ENCODE measurements at regions of chr6 and their contacts with region 1.

Region 1: GRCh38 chr6:34887753-34888513 is at the start of gene TAF11:
- DNase-seq: peak; percentile 97
- H3K4me3 Mint-ChIP-seq: peak within 1 kb of the TSS; percentile 100
- H3K27ac Mint-ChIP-seq: peak within 1 kb of the TSS; percentile 99
- H3K4me1 Mint-ChIP-seq: peaks cover 31% of the 10 kb centered on the region
- H3K27me3 Mint-ChIP-seq: peaks cover 9% of the 10 kb centered on the region
- total RNA-seq, gene TAF11: 37.3 and 40.3 TPM in 2 replicates

Region 2: GRCh38 chr6:34709386-34709785 is 178.5 kb before region 1 on chr6:
- intact Hi-C with region 1: no loop called
- DNase-seq: no peak
- H3K4me3 Mint-ChIP-seq: no peak overlapping the region
- H3K27ac Mint-ChIP-seq: no peak overlapping the region
- H3K4me1 Mint-ChIP-seq: peaks cover 4% of the 10 kb centered on the region
- H3K27me3 Mint-ChIP-seq: no peaks in the 10 kb centered on the region

Region 3: GRCh38 chr6:34757687-34758274 is 130.2 kb before region 1 on chr6:
- intact Hi-C with region 1: loop called (anchors 1 kb)
- DNase-seq: no peak
- H3K4me3 Mint-ChIP-seq: no peak overlapping the region
- H3K27ac Mint-ChIP-seq: no peak overlapping the region
- H3K4me1 Mint-ChIP-seq: peaks cover 7% of the 10 kb centered on the region
- H3K27me3 Mint-ChIP-seq: no peaks in the 10 kb centered on the region

Region 4: DNA sequence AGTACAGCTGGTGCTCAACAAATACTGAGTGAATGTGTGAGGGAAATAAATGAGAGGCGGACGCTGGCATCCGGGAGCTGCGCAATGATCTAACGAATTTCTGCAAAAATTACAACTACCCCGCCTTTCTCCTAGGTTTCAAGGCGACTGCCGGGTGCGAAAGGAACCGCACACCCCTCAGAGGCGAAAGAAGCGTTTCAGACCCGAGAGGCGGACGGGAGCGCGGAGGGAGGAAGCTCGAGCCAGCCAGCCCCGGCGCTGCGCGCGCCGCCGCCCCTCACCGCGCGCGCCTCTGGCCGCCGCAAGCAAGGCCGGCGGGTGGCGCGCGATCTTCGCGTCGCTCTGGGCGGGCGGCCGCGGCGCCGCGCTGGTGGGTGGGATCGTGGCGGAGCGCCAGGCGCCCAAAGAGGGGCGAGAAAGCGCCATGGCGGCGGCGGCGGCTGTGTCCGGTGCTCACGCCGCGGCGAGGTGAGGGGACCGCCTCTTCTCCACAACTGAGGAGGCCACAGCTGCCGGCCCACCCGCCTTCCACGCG is 96.2 kb before region 1 on chr6 and contains the start of gene BLTP3A:
- intact Hi-C with region 1: loop called (anchors 2 kb)
- DNase-seq: peak; percentile 94
- H3K4me3 Mint-ChIP-seq: peak within 1 kb of the TSS; percentile 97
- H3K27ac Mint-ChIP-seq: peak within 1 kb of the TSS; percentile 93
- H3K4me1 Mint-ChIP-seq: peaks cover 22% of the 10 kb centered on the region
- H3K27me3 Mint-ChIP-seq: no peaks in the 10 kb centered on the region
- total RNA-seq, gene BLTP3A: 17.0 and 18.3 TPM in 2 replicates

Region 5: GRCh38 chr6:34839666-34840352 is 48.1 kb before region 1 on chr6:
- intact Hi-C with region 1: no loop called
- DNase-seq: no peak
- H3K4me3 Mint-ChIP-seq: no peak overlapping the region
- H3K27ac Mint-ChIP-seq: no peak overlapping the region
- H3K4me1 Mint-ChIP-seq: peaks cover 5% of the 10 kb centered on the region
- H3K27me3 Mint-ChIP-seq: no peaks in the 10 kb centered on the region

Region 6: GRCh38 chr6:34901930-34902329 is 14.0 kb after region 1 on chr6:
- intact Hi-C with region 1: no loop called
- DNase-seq: no peak
- H3K4me3 Mint-ChIP-seq: no peak overlapping the region
- H3K27ac Mint-ChIP-seq: no peak overlapping the region
- H3K4me1 Mint-ChIP-seq: peaks cover 7% of the 10 kb centered on the region
- H3K27me3 Mint-ChIP-seq: peaks cover 14% of the 10 kb centered on the region

Region 7: DNA sequence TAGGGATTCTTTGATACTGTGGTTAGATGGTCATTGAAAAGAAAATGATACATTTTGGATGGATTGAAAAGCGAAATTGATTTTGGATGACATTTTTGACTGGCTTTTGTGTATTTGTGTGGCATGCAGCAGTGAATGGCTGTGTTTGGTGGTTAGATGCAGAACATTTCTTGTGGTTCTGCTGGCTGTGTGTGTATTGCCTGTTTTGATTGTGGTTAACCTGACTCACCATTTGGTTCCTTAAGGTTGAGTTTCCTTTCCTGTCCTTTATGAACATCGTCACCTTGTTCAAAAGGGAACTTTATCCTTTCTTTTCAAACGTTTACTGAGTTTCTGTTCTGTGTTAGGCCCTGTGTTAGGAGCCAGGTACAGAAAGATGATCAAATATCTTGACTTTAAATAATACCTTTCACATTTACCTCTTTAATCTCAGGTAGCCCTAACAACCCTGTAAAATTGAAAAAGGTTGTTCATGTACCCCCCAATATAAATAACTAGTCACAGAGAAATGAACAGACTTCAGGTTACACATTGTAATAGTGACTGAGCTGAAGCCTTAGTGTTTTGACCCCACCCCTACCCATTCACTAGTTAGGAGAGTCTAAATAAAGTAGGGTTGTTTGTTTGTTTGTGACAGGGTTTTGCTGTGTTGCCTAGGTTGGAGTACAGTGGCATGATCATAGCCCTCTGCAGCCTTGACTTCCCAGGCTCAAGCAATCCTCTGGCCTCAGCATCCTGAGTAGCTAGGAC is 25.0 kb after region 1 on chr6:
- intact Hi-C with region 1: loop called (anchors 1 kb)
- DNase-seq: peak; percentile 85
- H3K4me3 Mint-ChIP-seq: peak overlapping the region; percentile 64
- H3K27ac Mint-ChIP-seq: peak overlapping the region; percentile 87
- H3K4me1 Mint-ChIP-seq: peaks cover 35% of the 10 kb centered on the region
- H3K27me3 Mint-ChIP-seq: peaks cover 45% of the 10 kb centered on the region

Region 8: GRCh38 chr6:35259194-35259947 is 371.4 kb after region 1 on chr6 and contains the start of gene ZNF76:
- intact Hi-C with region 1: loop called (anchors 1 kb)
- DNase-seq: peak; percentile 97
- H3K4me3 Mint-ChIP-seq: peak within 1 kb of the TSS; percentile 96
- H3K27ac Mint-ChIP-seq: peak within 1 kb of the TSS; percentile 95
- H3K4me1 Mint-ChIP-seq: peaks cover 27% of the 10 kb centered on the region
- H3K27me3 Mint-ChIP-seq: no peaks in the 10 kb centered on the region
- total RNA-seq, gene ZNF76: 31.0 and 31.4 TPM in 2 replicates